Right lobe of liver (tissue), 6 donors: ENCODE measurements at regions of chr18 and their contacts with region 1.

Region 1: GRCh38 chr18:23703057-23703986 is 14.1 kb downstream of the LAMA3 start:
- DNase-seq: peak in 1 of 3 donors; percentile 45
- ATAC-seq: peak; percentile 94 to 99 (median 94)
- H3K4me3 ChIP-seq: no peak overlapping the region
- H3K27ac ChIP-seq: no peak overlapping the region
- H3K4me1 ChIP-seq: no peaks in the 10 kb centered on the region
- H3K27me3 ChIP-seq: no peaks in the 10 kb centered on the region
- CTCF ChIP-seq: peak; percentile 54 to 87 (median 62)
- POLR2A ChIP-seq: no peak

Region 2: DNA sequence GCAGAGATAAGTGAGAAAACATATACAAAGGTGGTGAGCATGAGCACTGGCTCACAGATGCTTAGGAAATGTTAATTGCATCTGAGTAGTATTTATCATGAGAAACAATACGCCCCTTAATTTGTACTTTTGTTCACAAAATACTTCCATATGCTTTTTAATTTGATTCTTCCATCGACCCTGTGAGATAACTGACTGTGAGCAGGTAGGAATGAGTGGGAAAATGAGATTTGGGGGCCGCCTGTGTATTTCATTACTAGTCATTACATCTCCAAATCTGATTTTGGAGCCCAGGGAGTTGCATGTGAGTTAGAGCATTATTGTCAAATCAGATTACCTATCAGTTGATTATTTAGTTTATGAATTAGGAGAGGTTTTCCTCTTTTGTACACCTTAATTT is 80.3 kb before region 1 on chr18:
- intact Hi-C with region 1: loop called (anchors 5 kb)
- DNase-seq: no peak
- ATAC-seq: no peak
- H3K4me3 ChIP-seq: no peak overlapping the region
- H3K27ac ChIP-seq: no peak overlapping the region
- H3K4me1 ChIP-seq: peaks cover 0 to 22% (median 4%) of the 10 kb centered on the region in 4 donors
- H3K27me3 ChIP-seq: no peaks in the 10 kb centered on the region
- CTCF ChIP-seq: no peak
- POLR2A ChIP-seq: no peak